ENCODE measurements at regions of chr13 and their contacts with region 1.

Region 1: GRCh38 chr13:91133941-91134802 is 213.3 kb upstream of the MIR17HG start:
- DNase-seq: peak; percentile 63
- ATAC-seq: peak; percentile 93
- H3K4me3 ChIP-seq: no peak overlapping the region
- H3K27ac ChIP-seq: no peak overlapping the region
- H3K4me1 ChIP-seq: no peaks in the 10 kb centered on the region
- H3K27me3 ChIP-seq: no peaks in the 10 kb centered on the region
- CTCF ChIP-seq: peak; percentile 70
- EP300 ChIP-seq: no peak
- POLR2A ChIP-seq: no peak
- RAD21 ChIP-seq: no peak

Region 2: GRCh38 chr13:90594694-90595093 is 539.5 kb before region 1 on chr13:
- CTCF ChIA-PET with region 1: no interaction called
- POLR2A ChIA-PET with region 1: no interaction called
- in situ Hi-C with region 1: no loop called
- intact Hi-C with region 1: no loop called
- DNase-seq: no peak
- ATAC-seq: no peak
- H3K4me3 ChIP-seq: no peak overlapping the region
- H3K27ac ChIP-seq: no peak overlapping the region
- H3K4me1 ChIP-seq: no peaks in the 10 kb centered on the region
- H3K27me3 ChIP-seq: no peaks in the 10 kb centered on the region
- CTCF ChIP-seq: no peak
- EP300 ChIP-seq: no peak
- POLR2A ChIP-seq: no peak
- RAD21 ChIP-seq: no peak

Region 3: DNA sequence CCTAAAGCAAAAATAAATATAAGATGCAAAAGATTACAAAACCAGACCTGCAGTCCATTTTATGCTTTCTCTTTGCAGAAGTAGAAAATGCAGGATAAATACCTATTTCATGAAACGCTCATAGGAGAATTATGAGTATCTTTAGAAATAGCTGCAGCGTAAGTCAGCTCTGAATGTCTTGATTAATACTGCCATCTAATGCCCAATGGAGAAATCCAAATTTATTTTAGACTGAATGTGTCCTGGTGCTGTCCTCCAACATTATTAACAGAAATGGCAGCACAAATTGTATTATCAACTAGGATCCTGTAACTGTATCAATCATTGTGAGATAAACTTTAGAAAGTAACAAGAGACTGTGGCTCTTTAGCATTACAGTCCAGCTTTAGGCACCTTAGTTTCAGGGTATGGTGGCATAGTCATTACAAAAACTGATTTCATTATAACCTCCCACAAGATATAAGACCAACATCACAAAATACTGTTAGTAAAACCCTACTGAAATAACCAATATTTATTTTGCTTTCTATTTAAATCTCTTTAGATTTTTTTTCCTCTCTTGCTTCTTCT is 51.2 kb after region 1 on chr13:
- CTCF ChIA-PET with region 1: interaction called, 5 read pairs
- POLR2A ChIA-PET with region 1: no interaction called
- in situ Hi-C with region 1: no loop called
- intact Hi-C with region 1: loop called (anchors 1 kb)
- DNase-seq: peak; percentile 9
- ATAC-seq: peak; percentile 43; the same call in 1 of the 3 replicates
- H3K4me3 ChIP-seq: no peak overlapping the region
- H3K27ac ChIP-seq: no peak overlapping the region
- H3K4me1 ChIP-seq: no peaks in the 10 kb centered on the region
- H3K27me3 ChIP-seq: no peaks in the 10 kb centered on the region; a peak in 2 of 5 replicates
- CTCF ChIP-seq: no peak
- EP300 ChIP-seq: no peak
- POLR2A ChIP-seq: no peak
- RAD21 ChIP-seq: no peak

Region 4: GRCh38 chr13:91247768-91248167 is 113.6 kb after region 1 on chr13:
- CTCF ChIA-PET with region 1: interaction called, 7 read pairs
- POLR2A ChIA-PET with region 1: no interaction called
- in situ Hi-C with region 1: loop called (anchors 10 kb)
- intact Hi-C with region 1: loop called (anchors 1 kb)
- DNase-seq: no peak
- ATAC-seq: no peak
- H3K4me3 ChIP-seq: no peak overlapping the region
- H3K27ac ChIP-seq: no peak overlapping the region
- H3K4me1 ChIP-seq: no peaks in the 10 kb centered on the region
- H3K27me3 ChIP-seq: no peaks in the 10 kb centered on the region
- CTCF ChIP-seq: 0 out of 2 replicates have a peak, but pooled peaks have one; percentile 4
- EP300 ChIP-seq: no peak
- POLR2A ChIP-seq: no peak
- RAD21 ChIP-seq: no peak